ENCODE measurements at regions of chr2 and their contacts with region 1.

Region 1: DNA sequence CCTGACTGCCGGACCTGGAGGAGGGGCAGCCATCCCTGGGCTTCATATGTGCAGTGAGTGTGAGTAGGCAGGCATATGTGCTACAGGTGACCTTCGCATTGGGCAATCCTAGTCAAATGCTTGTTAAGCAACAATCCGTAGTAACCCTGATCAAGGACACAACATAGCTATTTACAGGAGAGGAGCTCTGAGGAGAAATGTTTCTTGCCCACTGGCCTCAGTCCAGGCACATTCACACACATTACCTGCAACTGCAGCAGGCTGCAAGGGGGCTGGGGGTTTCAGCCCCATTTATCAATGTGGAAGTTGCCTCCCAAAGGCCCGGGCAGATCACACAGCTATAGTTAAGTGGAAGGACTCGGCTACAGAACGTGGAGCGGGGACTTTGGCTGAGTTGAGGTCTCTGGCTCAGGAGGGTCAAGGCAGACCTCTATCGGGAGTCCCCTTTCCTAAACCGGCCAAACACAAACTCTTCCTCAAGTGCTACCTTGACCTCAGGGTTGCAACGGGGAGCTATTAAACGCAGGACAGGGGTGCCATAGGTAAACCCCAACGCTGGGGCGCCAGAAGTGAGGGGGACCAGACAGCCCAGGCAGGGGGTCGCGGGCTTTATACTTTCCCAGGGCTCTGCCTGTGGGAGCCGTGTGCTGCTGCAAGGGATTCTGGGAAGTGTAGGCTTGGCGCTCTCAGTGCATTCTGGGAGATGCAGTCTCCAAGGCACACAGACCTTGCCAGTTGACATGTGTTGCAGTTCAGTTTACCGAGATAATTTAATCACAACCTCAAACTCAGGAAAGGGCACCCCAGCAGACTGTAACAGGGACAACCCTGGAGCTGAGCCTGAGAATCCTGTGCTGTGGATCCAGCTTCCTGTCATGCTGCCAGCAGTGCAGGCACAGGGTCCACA is 9.4 kb downstream of the KHK start:
- DNase-seq: peak; percentile 67
- ATAC-seq: peak; percentile 90
- H3K4me3 ChIP-seq: peak overlapping the region in 3 of 5 experiments; percentile 38 to 55 (median 48)
- H3K4me3 Mint-ChIP-seq: peak overlapping the region; percentile 81
- H3K27ac ChIP-seq: no peak overlapping the region
- H3K27ac Mint-ChIP-seq: peak overlapping the region; percentile 41
- H3K4me1 ChIP-seq: peaks cover 6 to 9% of the 10 kb centered on the region in 2 donors
- H3K4me1 Mint-ChIP-seq: peaks cover 11% of the 10 kb centered on the region
- H3K27me3 ChIP-seq: no peaks in the 10 kb centered on the region
- H3K27me3 Mint-ChIP-seq: no peaks in the 10 kb centered on the region
- CTCF ChIP-seq: no peak

Region 2: DNA sequence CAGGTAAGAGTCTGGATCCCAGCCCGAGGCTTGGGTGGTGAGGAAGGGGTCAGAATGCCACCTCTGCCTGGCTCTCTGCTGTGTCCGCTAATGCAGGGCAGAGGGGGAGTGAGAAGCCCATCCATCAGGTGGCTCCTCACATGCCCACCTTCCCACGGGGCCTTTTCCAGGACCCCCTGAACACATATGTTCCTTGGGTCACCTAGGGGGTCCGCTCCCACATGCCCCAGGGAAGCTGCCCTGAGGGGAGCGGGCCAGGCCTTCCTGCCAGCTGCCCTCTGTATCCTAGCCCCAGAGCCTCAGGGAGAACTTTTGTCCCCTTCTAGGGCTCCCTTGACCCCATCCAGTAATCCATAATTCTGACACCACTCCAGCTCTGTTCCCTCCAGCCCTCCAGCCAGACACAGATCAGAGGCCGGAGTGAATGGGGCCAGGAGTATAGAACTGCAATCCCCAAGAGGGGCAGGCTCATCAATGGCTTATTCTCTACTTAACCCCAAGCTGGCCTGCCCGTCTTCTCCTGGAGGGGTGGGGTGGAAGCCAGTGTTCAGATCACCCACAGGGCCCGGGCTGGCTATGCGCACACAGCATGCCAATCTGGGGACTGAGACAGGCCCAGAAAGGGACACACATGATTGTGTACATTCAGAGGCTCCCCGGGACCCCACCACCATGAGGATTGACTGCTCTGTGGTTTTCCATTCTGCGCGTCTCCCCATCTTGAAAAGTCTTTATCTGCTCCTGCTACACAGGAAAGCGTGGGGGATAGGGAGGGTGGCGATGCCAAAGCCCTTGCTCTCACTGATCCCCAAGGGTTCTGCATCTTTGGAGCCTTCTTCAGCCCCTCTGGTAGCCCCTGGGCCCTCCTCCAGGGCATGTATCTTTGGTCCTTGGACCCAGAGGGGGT is 16.5 kb before region 1 on chr2:
- CTCF ChIA-PET with region 1: interaction called, 4 read pairs
- POLR2A ChIA-PET with region 1: no interaction called
- intact Hi-C with region 1: loop called (anchors 1 kb)
- DNase-seq: no peak
- ATAC-seq: no peak
- H3K4me3 ChIP-seq: no peak overlapping the region
- H3K4me3 Mint-ChIP-seq: no peak overlapping the region
- H3K27ac ChIP-seq: no peak overlapping the region
- H3K27ac Mint-ChIP-seq: no peak overlapping the region
- H3K4me1 ChIP-seq: peaks cover 27 to 37% of the 10 kb centered on the region in 2 donors
- H3K4me1 Mint-ChIP-seq: peaks cover 37% of the 10 kb centered on the region
- H3K27me3 ChIP-seq: peaks cover 0 to 11% (median 4%) of the 10 kb centered on the region in 4 experiments
- H3K27me3 Mint-ChIP-seq: no peaks in the 10 kb centered on the region
- CTCF ChIP-seq: no peak

Region 3: DNA sequence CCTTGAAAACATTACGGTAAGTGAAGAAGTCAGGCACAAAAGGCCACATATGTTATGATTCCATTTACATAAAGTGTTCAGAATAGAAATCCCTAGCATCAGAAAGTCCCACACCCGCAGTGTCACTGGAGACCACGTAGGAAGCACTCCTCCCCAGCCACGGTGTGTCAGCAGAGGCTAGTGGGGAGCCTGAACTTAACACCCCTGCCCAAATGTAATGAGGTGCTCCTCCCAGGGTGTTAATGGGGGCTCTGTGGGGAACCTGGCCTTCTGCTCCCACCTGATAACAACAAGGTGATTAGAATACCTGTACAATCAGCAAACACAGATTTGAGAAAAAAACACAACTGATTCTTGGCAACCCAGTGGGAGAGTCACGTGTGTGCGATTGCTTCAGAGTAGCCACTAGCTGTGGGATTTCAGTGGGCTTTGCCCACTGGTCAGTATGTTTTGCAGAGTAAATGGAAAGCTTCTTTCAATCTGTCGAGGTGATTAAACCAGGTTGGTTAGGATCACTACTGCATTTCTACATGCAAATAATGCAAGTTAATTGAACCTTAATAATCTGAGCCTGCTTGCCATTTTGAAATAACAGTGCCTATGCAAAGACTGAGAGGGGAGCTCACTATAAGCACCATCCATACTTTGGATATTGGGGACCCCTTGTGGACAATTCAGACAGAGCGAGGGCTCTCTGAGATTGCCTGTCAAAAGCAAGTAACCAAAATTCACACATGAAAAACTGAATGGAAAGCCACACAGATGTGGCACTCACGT is 95.2 kb after region 1 on chr2:
- CTCF ChIA-PET with region 1: interaction called, 27 read pairs
- POLR2A ChIA-PET with region 1: no interaction called
- intact Hi-C with region 1: loop called (anchors 1 kb)
- DNase-seq: peak; percentile 74
- ATAC-seq: peak; percentile 73
- H3K4me3 ChIP-seq: no peak overlapping the region
- H3K4me3 Mint-ChIP-seq: no peak overlapping the region
- H3K27ac ChIP-seq: no peak overlapping the region
- H3K27ac Mint-ChIP-seq: no peak overlapping the region
- H3K4me1 ChIP-seq: no peaks in the 10 kb centered on the region
- H3K4me1 Mint-ChIP-seq: no peaks in the 10 kb centered on the region
- H3K27me3 ChIP-seq: no peaks in the 10 kb centered on the region
- H3K27me3 Mint-ChIP-seq: no peaks in the 10 kb centered on the region
- CTCF ChIP-seq: peak; percentile 74